Heart left ventricle (tissue), 16 donors: ENCODE measurements at regions of chr12 and their contacts with region 1.

Region 1: GRCh38 chr12:57846577-57847319 is at the start of gene CTDSP2:
- DNase-seq: peak; percentile 100
- ATAC-seq: peak; percentile 90 to 95 (median 92)
- H3K4me3 ChIP-seq: peak within 1 kb of the TSS; percentile 72 to 100 (median 96)
- H3K27ac ChIP-seq: peak within 1 kb of the TSS; percentile 97 to 100 (median 100)
- H3K4me1 ChIP-seq: peaks cover 16 to 49% (median 42%) of the 10 kb centered on the region in 12 donors
- H3K27me3 ChIP-seq: no peaks in the 10 kb centered on the region
- CTCF ChIP-seq: peak in 1 of 12 donors; percentile 9
- POLR2A ChIP-seq: peak; percentile 54 to 97
- total RNA-seq, gene CTDSP2: 69.9 to 191 (median 89.3) TPM

Region 2: DNA sequence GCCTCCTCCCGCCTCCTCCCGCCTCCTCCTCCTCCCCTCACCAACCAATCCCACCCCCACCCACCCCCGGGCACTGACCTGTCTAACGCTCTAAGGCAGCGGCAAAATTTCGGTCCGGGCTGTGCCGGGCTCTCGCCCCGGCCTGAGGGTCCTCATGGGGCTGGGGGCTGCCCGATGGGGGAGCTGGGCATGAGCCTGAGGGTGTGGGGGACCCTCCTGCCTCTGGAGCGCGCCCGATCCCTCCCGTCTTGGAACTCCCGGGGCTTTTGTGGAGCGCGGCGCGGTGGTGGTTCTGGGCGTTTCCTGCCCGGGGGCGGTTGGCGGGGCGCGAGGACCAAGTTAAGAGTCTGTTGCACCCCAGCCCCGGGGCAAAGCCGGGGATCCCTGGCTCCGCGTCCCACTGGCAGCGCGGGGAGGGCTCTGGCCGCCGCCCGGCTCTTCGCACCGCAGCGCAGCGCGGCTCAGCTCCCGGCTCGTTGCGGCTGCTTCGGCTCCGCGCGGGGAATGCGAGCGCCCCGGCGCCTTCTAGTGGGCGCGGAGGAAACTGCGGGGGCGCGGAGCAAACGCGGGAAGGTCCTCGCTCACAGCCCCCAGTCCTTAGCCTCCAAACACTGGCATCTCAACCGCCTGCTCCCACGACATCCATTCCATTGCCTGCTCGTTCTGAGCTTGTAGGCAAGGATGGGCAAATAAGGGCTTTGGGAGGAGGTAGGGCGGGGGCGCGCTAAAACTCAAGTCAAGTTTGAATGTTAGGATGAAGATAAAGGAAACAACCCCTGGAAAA is 213.9 kb before region 1 on chr12 and contains the start of gene B4GALNT1:
- intact Hi-C with region 1: no loop called
- DNase-seq: peak in 4 of 5 donors; percentile 46 to 79 (median 66)
- ATAC-seq: peak in 3 of 4 donors; percentile 84 to 94 (median 84)
- H3K4me3 ChIP-seq: peak within 1 kb of the TSS; percentile 46 to 71 (median 64)
- H3K27ac ChIP-seq: peak within 1 kb of the TSS in 4 of 12 donors; percentile 17 to 57 (median 44)
- H3K4me1 ChIP-seq: peaks cover 0 to 24% (median 11%) of the 10 kb centered on the region in 12 donors
- H3K27me3 ChIP-seq: peaks cover 0 to 74% (median 24%) of the 10 kb centered on the region in 9 donors
- CTCF ChIP-seq: peak; percentile 77 to 94 (median 88)
- POLR2A ChIP-seq: no peak
- total RNA-seq, gene B4GALNT1: 1.9 to 8.8 (median 5.9) TPM

Region 3: GRCh38 chr12:57836442-57837375 is 10.0 kb before region 1 on chr12:
- intact Hi-C with region 1: loop called in 1 of 10 experiments (anchors 1 kb)
- DNase-seq: peak; percentile 87 to 91 (median 90)
- ATAC-seq: peak; percentile 37 to 76 (median 52)
- H3K4me3 ChIP-seq: peak overlapping the region in 10 of 12 donors; percentile 6 to 49 (median 26)
- H3K27ac ChIP-seq: peak overlapping the region in 11 of 12 donors; percentile 51 to 100 (median 70)
- H3K4me1 ChIP-seq: peaks cover 65 to 100% (median 100%) of the 10 kb centered on the region in 12 donors
- H3K27me3 ChIP-seq: no peaks in the 10 kb centered on the region
- CTCF ChIP-seq: no peak
- POLR2A ChIP-seq: no peak

Region 4: DNA sequence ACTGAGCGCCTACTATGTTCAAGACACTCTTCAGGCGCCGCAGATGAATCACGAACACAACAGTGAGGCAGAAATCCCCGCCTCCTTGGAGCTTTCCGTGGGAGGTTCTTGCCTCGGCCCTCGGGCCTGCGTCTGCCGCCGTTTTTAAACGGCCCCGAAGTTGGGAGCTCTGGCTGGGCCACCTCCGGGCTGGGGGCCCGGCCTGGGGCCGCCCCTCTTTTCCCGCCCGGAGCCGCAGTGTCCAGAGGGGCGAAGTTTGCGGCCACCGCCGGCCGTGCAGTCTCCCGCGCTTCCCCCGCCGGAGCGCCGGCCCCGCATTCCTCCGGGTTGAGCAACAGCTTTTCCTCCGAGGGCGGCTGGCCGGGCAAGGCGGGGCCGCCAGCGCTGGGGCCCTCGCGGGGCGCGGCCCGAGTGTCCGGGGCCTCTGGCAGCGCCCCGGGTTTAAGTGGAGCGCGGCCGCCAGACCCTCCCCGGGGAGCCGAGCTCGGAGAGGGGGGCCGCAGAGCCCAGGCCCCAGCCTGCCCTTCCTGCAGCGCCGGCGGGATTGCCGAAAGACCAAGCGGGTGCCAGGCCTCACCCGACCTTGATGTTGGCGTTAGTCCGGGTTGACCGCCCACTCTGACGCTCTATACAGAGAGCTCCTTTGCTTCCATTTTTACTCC is 18.5 kb after region 1 on chr12:
- intact Hi-C with region 1: loop called in 1 of 10 experiments (anchors 2 kb)
- DNase-seq: peak; percentile 80 to 91 (median 88)
- ATAC-seq: peak; percentile 43 to 94 (median 88)
- H3K4me3 ChIP-seq: peak overlapping the region; percentile 30 to 62 (median 59)
- H3K27ac ChIP-seq: peak overlapping the region; percentile 92 to 98 (median 94)
- H3K4me1 ChIP-seq: peaks cover 0 to 29% (median 19%) of the 10 kb centered on the region in 12 donors
- H3K27me3 ChIP-seq: no peaks in the 10 kb centered on the region
- CTCF ChIP-seq: no peak
- POLR2A ChIP-seq: peak in 1 of 2 donors; percentile 80

Region 5: GRCh38 chr12:57893431-57894353 is 46.9 kb after region 1 on chr12:
- intact Hi-C with region 1: loop called in 8 of 10 experiments (anchors 1 to 5 kb)
- DNase-seq: peak; percentile 92 to 96 (median 94)
- ATAC-seq: peak; percentile 72 to 77 (median 74)
- H3K4me3 ChIP-seq: peak overlapping the region in 7 of 12 donors; percentile 0 to 35 (median 19)
- H3K27ac ChIP-seq: peak overlapping the region; percentile 96 to 99 (median 98)
- H3K4me1 ChIP-seq: peaks cover 17 to 99% (median 86%) of the 10 kb centered on the region in 12 donors
- H3K27me3 ChIP-seq: no peaks in the 10 kb centered on the region
- CTCF ChIP-seq: peak in 4 of 12 donors; percentile 11 to 40 (median 27)
- POLR2A ChIP-seq: peak in 1 of 2 donors; percentile 7

Region 6: DNA sequence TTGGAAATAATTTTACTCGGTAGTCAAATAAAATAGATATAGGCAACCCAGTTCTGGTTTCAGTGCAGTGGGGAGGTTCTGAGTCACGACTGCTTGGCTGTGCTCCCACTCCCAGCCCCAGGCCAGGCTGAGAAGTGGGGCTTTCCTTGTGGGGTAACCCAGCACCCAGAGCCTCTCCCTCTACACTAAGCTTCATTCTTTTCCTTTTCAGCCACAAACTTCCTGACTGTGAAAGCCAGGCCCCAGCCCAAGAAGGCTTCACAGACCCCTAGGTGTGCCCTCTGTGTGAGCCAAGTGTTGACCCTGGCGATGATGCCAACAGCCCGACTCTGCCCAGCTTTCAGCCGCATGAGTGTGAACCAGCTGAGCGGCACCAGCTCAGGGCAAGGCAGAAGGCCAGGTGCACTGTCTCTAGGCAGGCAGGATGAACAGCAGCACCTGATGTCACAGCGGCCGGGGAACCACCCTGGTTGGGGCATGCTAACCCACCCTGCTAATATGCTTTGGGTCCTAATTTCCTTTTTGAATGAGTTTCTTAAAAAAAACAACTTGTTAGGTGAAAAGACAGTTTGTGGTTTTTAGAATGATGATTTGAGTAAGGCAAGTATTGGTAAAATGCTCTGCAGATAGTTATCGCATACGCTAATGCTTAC is 52.4 kb after region 1 on chr12:
- intact Hi-C with region 1: loop called in 6 of 10 experiments (anchors 2 to 5 kb)
- DNase-seq: peak in 3 of 5 donors; percentile 51 to 65 (median 53)
- ATAC-seq: peak in 3 of 4 donors; percentile 25 to 44 (median 36)
- H3K4me3 ChIP-seq: no peak overlapping the region
- H3K27ac ChIP-seq: peak overlapping the region in 11 of 12 donors; percentile 36 to 99 (median 97)
- H3K4me1 ChIP-seq: peaks cover 5 to 58% (median 48%) of the 10 kb centered on the region in 12 donors
- H3K27me3 ChIP-seq: no peaks in the 10 kb centered on the region
- CTCF ChIP-seq: no peak
- POLR2A ChIP-seq: no peak